ENCODE measurements at regions of chr9 and their contacts with region 1.

Region 1: GRCh38 chr9:115591584-115591984 is 473.6 kb upstream of the TNC start:
- DNase-seq: peak; percentile 100
- ATAC-seq: peak; percentile 61
- H3K4me3 ChIP-seq: no peak overlapping the region
- H3K27ac ChIP-seq: peak overlapping the region; percentile 87
- H3K4me1 ChIP-seq: peaks cover 24% of the 10 kb centered on the region
- H3K27me3 ChIP-seq: no peaks in the 10 kb centered on the region
- CTCF ChIP-seq: peak; percentile 96
- POLR2A ChIP-seq: peak; percentile 65
- RAD21 ChIP-seq: peak; percentile 100

Region 2: GRCh38 chr9:115757461-115757860 is 165.9 kb after region 1 on chr9:
- CTCF ChIA-PET with region 1: no interaction called
- POLR2A ChIA-PET with region 1: no interaction called
- dilution Hi-C with region 1: no loop called
- in situ Hi-C with region 1: no loop called
- intact Hi-C with region 1: loop called (anchors 5 kb)
- DNase-seq: no peak
- ATAC-seq: no peak
- H3K4me3 ChIP-seq: no peak overlapping the region
- H3K27ac ChIP-seq: no peak overlapping the region
- H3K4me1 ChIP-seq: no peaks in the 10 kb centered on the region
- H3K27me3 ChIP-seq: no peaks in the 10 kb centered on the region
- CTCF ChIP-seq: no peak
- POLR2A ChIP-seq: no peak
- RAD21 ChIP-seq: no peak

Region 3: GRCh38 chr9:115923903-115924668 is 332.5 kb after region 1 on chr9:
- CTCF ChIA-PET with region 1: no interaction called
- POLR2A ChIA-PET with region 1: no interaction called
- dilution Hi-C with region 1: no loop called
- in situ Hi-C with region 1: no loop called
- intact Hi-C with region 1: loop called (anchors 1 kb)
- DNase-seq: peak; percentile 99
- ATAC-seq: peak; percentile 99
- H3K4me3 ChIP-seq: no peak overlapping the region
- H3K27ac ChIP-seq: peak overlapping the region; percentile 100
- H3K4me1 ChIP-seq: peaks cover 26% of the 10 kb centered on the region
- H3K27me3 ChIP-seq: no peaks in the 10 kb centered on the region
- CTCF ChIP-seq: no peak
- POLR2A ChIP-seq: no peak
- RAD21 ChIP-seq: no peak; the same call in none of the 2 replicates

Region 4: DNA sequence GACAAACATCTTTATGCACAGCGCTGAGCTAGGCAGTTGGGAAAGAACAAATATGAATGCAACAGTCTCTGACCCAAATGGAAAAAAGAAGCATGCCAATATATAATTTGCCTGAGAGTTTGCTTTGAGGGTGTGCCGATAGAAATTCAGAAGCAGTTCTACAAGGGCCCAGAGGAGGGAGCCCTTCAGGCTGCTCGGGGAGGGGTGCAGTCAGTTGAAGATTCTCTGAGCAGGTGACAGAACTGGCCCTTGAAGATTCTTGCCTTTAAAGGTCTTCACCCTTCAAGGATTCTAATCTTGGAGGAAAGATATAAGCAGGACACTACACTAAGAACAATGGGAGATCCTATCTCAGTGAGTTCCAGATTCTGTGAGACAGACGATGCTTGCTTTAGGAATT is 558.3 kb after region 1 on chr9:
- CTCF ChIA-PET with region 1: interaction called, 11 read pairs
- POLR2A ChIA-PET with region 1: no interaction called
- dilution Hi-C with region 1: no loop called
- in situ Hi-C with region 1: loop called (anchors 10 kb)
- intact Hi-C with region 1: loop called (anchors 1 kb)
- DNase-seq: no peak
- ATAC-seq: no peak
- H3K4me3 ChIP-seq: no peak overlapping the region
- H3K27ac ChIP-seq: no peak overlapping the region
- H3K4me1 ChIP-seq: peaks cover 5% of the 10 kb centered on the region
- H3K27me3 ChIP-seq: no peaks in the 10 kb centered on the region
- CTCF ChIP-seq: peak; percentile 46
- POLR2A ChIP-seq: no peak
- RAD21 ChIP-seq: peak; percentile 44

Region 5: GRCh38 chr9:116572095-116572748 is 980.6 kb after region 1 on chr9:
- CTCF ChIA-PET with region 1: interaction called, 7 read pairs
- POLR2A ChIA-PET with region 1: no interaction called
- dilution Hi-C with region 1: no loop called
- in situ Hi-C with region 1: loop called (anchors 5 kb)
- intact Hi-C with region 1: loop called (anchors 1 kb)
- DNase-seq: peak; percentile 84
- ATAC-seq: peak; percentile 95
- H3K4me3 ChIP-seq: no peak overlapping the region
- H3K27ac ChIP-seq: no peak overlapping the region
- H3K4me1 ChIP-seq: peaks cover 5% of the 10 kb centered on the region; the same call in 1 of the 2 replicates
- H3K27me3 ChIP-seq: no peaks in the 10 kb centered on the region
- CTCF ChIP-seq: peak; percentile 94
- POLR2A ChIP-seq: peak; percentile 59; the same call in 1 of the 2 replicates
- RAD21 ChIP-seq: peak; percentile 99